ENCODE measurements at regions of chr19 and their contacts with region 1.

Region 1: GRCh38 chr19:53158119-53158656 is 665 bp downstream of the ZNF347 start:
- DNase-seq: peak; percentile 32
- ATAC-seq: peak; percentile 16
- H3K4me3 Mint-ChIP-seq: peak overlapping the region; percentile 89
- H3K27ac Mint-ChIP-seq: peak overlapping the region; percentile 79
- H3K4me1 Mint-ChIP-seq: peaks cover 24% of the 10 kb centered on the region
- H3K27me3 Mint-ChIP-seq: no peaks in the 10 kb centered on the region
- CTCF ChIP-seq: no peak

Region 2: GRCh38 chr19:52993323-52994178 is 164.6 kb before region 1 on chr19:
- CTCF ChIA-PET with region 1: no interaction called
- POLR2A ChIA-PET with region 1: no interaction called
- intact Hi-C with region 1: loop called (anchors 5 kb)
- DNase-seq: peak; percentile 70
- ATAC-seq: peak; percentile 97
- H3K4me3 Mint-ChIP-seq: peak overlapping the region; percentile 84
- H3K27ac Mint-ChIP-seq: no peak overlapping the region
- H3K4me1 Mint-ChIP-seq: peaks cover 11% of the 10 kb centered on the region
- H3K27me3 Mint-ChIP-seq: peaks cover 5% of the 10 kb centered on the region
- CTCF ChIP-seq: no peak

Region 3: GRCh38 chr19:53254411-53255341 is 96.5 kb after region 1 on chr19 and contains the start of gene ZNF677:
- CTCF ChIA-PET with region 1: no interaction called
- POLR2A ChIA-PET with region 1: no interaction called
- intact Hi-C with region 1: loop called (anchors 10 kb)
- DNase-seq: peak; percentile 57
- ATAC-seq: peak; percentile 99
- H3K4me3 Mint-ChIP-seq: peak within 1 kb of the TSS; percentile 87
- H3K27ac Mint-ChIP-seq: peak within 1 kb of the TSS; percentile 77
- H3K4me1 Mint-ChIP-seq: peaks cover 12% of the 10 kb centered on the region
- H3K27me3 Mint-ChIP-seq: no peaks in the 10 kb centered on the region
- CTCF ChIP-seq: no peak
- total RNA-seq, gene ZNF677: 13.7 and 14.2 TPM in 2 replicates

Measured in activated B cell treated with CpG ODN at 0.5 μM for 24 hours (primary cell).